Sigmoid colon (tissue), 7 donors: ENCODE measurements at regions of chr3 and their contacts with region 1.

Region 1: GRCh38 chr3:72123908-72124441 is 339.0 kb upstream of the PROK2 start:
- DNase-seq: peak; percentile 81
- H3K4me3 ChIP-seq: no peak overlapping the region
- H3K27ac ChIP-seq: peak overlapping the region in 1 of 4 donors; percentile 19
- H3K4me1 ChIP-seq: peaks cover 0 to 15% (median 12%) of the 10 kb centered on the region in 4 donors
- H3K27me3 ChIP-seq: no peaks in the 10 kb centered on the region
- CTCF ChIP-seq: no peak
- EP300 ChIP-seq: no peak
- POLR2A ChIP-seq: no peak

Region 2: DNA sequence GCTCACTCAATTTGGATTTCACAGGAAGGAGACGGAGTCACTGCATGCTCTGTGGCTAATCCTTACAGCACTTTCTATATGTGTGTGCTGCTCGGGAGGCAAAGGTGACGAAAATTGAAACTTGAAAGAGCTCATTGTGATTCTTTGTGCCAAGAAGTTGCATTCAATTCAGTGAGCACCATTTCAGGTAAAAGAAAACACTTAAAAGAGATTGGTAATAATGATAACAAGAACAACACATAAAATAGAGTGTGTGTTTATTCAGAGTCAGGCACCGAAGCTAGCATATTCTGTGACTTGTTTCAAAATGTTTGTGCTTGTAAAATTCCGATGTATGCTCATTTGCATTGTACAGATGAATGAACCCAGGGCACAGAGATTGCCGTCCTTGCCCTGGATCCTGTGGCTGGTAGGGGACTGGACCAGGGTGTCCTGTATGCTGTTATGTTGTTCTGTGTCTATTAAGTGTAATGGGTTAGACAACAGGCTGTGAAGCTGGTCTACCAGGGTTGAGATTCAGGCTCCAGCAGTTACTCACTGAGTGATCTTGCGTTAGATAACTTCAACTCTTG is 145.7 kb before region 1 on chr3:
- intact Hi-C with region 1: no loop called
- DNase-seq: no peak
- H3K4me3 ChIP-seq: no peak overlapping the region
- H3K27ac ChIP-seq: no peak overlapping the region
- H3K4me1 ChIP-seq: no peaks in the 10 kb centered on the region
- H3K27me3 ChIP-seq: no peaks in the 10 kb centered on the region
- CTCF ChIP-seq: no peak
- EP300 ChIP-seq: no peak
- POLR2A ChIP-seq: no peak

Region 3: DNA sequence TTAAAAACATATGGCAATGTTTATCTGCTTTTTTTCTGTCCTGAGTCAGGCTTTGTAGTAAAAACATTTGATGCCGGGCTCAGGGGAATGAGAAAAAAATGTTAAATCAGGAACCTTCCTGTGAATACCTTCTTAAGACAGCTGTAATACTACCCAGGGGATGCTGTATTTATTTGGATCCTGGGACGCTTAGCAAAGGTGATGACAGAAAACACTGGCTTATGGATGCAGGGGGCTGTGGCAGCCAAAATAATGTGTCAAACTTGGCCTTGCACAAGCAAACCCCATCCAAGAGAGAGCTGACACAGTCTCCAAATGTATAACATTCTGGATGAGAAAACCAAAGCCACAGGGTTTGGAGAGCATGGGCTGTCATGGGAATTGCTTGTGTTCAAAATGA is 99.1 kb after region 1 on chr3:
- intact Hi-C with region 1: loop called (anchors 10 kb)
- DNase-seq: no peak
- H3K4me3 ChIP-seq: no peak overlapping the region
- H3K27ac ChIP-seq: no peak overlapping the region
- H3K4me1 ChIP-seq: peaks cover 0 to 14% (median 5%) of the 10 kb centered on the region in 4 donors
- H3K27me3 ChIP-seq: no peaks in the 10 kb centered on the region
- CTCF ChIP-seq: no peak
- EP300 ChIP-seq: no peak
- POLR2A ChIP-seq: no peak